HepG2 (cell line): ENCODE measurements at regions of chr14 and their contacts with region 1.

Region 1: GRCh38 chr14:102509744-102510615 is at the start of gene ANKRD9:
- DNase-seq: peak; percentile 85
- ATAC-seq: peak; percentile 62
- H3K4me3 ChIP-seq: peak within 1 kb of the TSS; percentile 67 to 90 (median 84)
- H3K27ac ChIP-seq: peak within 1 kb of the TSS; percentile 80
- H3K4me1 ChIP-seq: peaks cover 55% of the 10 kb centered on the region
- H3K27me3 ChIP-seq: no peaks in the 10 kb centered on the region; a peak in 2 of 5 replicates
- CTCF ChIP-seq: peak; percentile 38
- EP300 ChIP-seq: no peak
- POLR2A ChIP-seq: no peak; a peak in 2 of 4 replicates
- RAD21 ChIP-seq: peak; percentile 26; the same call in 1 of the 2 replicates
- total RNA-seq, gene ANKRD9: 5.7 and 10.0 TPM in 2 replicates

Region 2: GRCh38 chr14:102481791-102482238 is 28.2 kb before region 1 on chr14:
- CTCF ChIA-PET with region 1: no interaction called
- POLR2A ChIA-PET with region 1: interaction called, 10 read pairs
- in situ Hi-C with region 1: no loop called
- intact Hi-C with region 1: no loop called
- DNase-seq: peak; percentile 91
- ATAC-seq: peak; percentile 90
- H3K4me3 ChIP-seq: no peak overlapping the region
- H3K27ac ChIP-seq: peak overlapping the region; percentile 40
- H3K4me1 ChIP-seq: peaks cover 30% of the 10 kb centered on the region
- H3K27me3 ChIP-seq: no peaks in the 10 kb centered on the region
- CTCF ChIP-seq: no peak
- EP300 ChIP-seq: 0 out of 4 replicates have a peak, but pooled peaks have one; percentile 24 to 33
- POLR2A ChIP-seq: no peak
- RAD21 ChIP-seq: no peak